Activated CD4-positive, alpha-beta memory T cell treated with anti-CD3 and anti-CD28 coated beads for 36 hours (primary cell): ENCODE measurements at regions of chr13 and their contacts with region 1.

Region 1: GRCh38 chr13:35057858-35058257 is 115.8 kb downstream of the NBEA start:
- DNase-seq: no peak
- H3K4me3 Mint-ChIP-seq: no peak overlapping the region
- H3K27ac Mint-ChIP-seq: no peak overlapping the region
- H3K4me1 Mint-ChIP-seq: no peaks in the 10 kb centered on the region
- H3K27me3 Mint-ChIP-seq: no peaks in the 10 kb centered on the region

Region 2: DNA sequence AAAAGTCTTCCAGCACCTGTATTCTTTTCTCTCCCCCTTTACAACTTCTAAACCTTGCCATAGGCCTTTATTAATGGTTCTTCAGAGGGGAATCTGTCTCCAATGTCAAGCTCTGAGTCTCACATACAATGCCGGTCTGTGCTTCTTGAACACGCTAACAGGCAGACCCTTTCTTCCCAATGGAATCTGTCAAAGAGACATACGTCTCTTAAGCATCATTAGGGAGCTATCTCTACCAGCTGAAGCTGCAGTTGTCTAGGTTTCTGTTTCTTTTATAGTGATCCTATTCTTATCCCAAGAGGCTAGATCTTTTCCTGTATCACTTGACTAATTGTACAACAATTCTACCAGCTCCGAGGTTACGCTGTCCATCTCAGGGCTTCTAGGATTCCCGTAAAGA is 676.6 kb before region 1 on chr13:
- CTCF ChIA-PET with region 1: no interaction called
- POLR2A ChIA-PET with region 1: no interaction called
- intact Hi-C with region 1: loop called (anchors 5 kb)
- DNase-seq: no peak
- H3K4me3 Mint-ChIP-seq: no peak overlapping the region
- H3K27ac Mint-ChIP-seq: no peak overlapping the region
- H3K4me1 Mint-ChIP-seq: no peaks in the 10 kb centered on the region
- H3K27me3 Mint-ChIP-seq: no peaks in the 10 kb centered on the region

Region 3: DNA sequence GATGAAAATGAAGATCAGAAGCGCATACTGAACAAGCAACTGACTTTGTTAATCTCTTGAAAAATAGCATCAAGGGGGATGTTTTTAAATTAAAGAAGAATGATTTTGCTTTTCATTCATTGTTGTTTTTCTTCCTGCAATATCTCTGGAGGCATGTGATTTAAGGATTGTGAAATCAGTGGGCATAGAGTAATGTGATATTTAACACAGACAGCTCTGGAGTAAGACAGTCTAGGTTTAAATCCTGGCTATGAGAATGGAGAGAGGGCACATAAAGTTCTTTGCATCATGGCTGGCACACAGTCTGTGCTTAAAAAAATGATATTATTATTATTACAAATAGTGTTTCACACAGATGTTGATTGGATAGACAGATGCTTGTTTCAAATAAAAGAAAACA is 358.9 kb before region 1 on chr13:
- CTCF ChIA-PET with region 1: no interaction called
- POLR2A ChIA-PET with region 1: no interaction called
- intact Hi-C with region 1: no loop called
- DNase-seq: no peak
- H3K4me3 Mint-ChIP-seq: no peak overlapping the region
- H3K27ac Mint-ChIP-seq: no peak overlapping the region
- H3K4me1 Mint-ChIP-seq: no peaks in the 10 kb centered on the region
- H3K27me3 Mint-ChIP-seq: no peaks in the 10 kb centered on the region